Posterior cingulate gyrus (tissue), 11 donors: ENCODE measurements at regions of chr12 and their contacts with region 1.

Region 1: GRCh38 chr12:74415633-74416032 is 122.0 kb upstream of the ATXN7L3B start:
- DNase-seq: no peak

Region 2: DNA sequence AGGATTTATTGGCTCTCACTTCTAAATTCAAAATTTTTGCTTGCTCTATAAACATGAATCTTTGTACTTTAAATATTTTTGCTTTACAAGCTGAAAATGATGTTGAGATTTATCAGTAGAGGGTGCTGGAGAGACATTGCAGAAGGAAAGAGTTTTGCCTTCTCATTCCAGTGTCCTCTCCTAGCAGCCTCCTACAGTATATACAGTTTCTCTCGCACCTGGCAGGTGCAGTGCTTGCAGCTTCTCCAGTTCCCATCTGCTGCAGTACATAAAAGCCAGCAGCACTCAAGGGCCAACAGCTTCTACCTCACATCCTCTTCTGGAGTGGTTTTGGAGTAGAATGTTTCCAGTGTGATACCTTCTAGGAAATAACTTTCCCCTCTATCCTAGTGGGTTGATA is 479.8 kb before region 1 on chr12:
- intact Hi-C with region 1: loop called (anchors 5 kb)
- DNase-seq: no peak

Region 3: GRCh38 chr12:74021937-74022336 is 393.7 kb before region 1 on chr12:
- intact Hi-C with region 1: loop called (anchors 5 kb)
- DNase-seq: peak in 9 of 10 donors; percentile 30 to 92 (median 51)

Region 4: DNA sequence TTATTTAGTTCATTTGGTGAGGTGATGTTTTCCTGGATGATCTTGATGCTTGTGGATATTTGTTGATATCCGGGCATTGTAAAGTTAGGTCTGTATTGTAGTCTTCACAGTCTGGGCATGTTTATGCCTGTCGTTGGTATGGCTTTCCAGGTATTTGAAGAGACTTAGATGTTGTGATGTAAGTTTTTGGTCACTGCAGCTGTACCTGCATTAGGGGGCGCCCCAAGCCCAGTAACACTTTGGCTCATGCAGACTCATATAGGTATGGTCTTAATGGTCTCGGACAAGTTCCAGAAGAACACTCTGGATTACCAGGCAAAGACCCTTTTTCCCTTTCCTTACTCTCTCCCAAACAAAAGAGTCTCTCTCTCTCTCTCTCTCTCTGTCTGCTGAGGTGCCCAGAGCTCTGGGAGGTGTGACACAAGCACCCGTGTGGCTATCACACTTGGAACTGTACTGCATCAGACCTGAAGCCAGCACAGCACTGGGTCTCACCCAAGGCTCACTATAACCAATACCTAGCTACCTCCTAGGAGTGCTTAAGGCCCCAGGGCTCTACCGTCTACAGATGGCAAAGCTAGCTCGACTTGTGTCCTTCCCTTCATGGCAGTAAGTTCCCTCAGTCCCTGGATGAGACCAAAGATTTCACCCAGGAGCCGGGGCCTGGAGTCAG is 303.8 kb before region 1 on chr12:
- intact Hi-C with region 1: loop called (anchors 5 kb)
- DNase-seq: peak in 5 of 10 donors; percentile 9 to 88 (median 48)

Region 5: GRCh38 chr12:74185360-74185759 is 230.3 kb before region 1 on chr12:
- intact Hi-C with region 1: no loop called
- DNase-seq: no peak

Region 6: GRCh38 chr12:74537707-74538385 is 122.2 kb after region 1 on chr12 and contains the start of gene ATXN7L3B:
- intact Hi-C with region 1: loop called (anchors 2 kb)
- DNase-seq: peak; percentile 88 to 99 (median 91)

Region 7: DNA sequence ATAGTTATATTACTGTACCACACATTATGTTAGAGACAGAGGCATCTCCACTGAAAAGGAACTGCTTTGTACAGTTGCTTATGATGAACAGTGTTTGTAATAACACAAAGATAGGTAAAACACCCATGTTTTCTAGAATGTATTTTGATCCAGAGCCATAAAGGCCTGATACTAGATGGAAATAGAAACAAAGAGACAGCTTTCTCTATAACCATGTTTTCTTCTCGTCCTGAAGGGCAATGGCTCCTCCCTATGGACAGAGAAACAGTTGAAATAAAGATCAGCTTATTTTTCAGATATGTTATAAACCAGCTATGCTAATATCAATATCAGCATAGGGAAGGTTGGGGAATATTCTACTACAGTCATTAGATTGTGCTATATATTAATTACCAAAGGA is 231.2 kb after region 1 on chr12:
- intact Hi-C with region 1: loop called (anchors 10 kb)
- DNase-seq: peak in 1 of 10 donors; percentile 23